ENCODE measurements at regions of chr11 and their contacts with region 1.

Region 1: DNA sequence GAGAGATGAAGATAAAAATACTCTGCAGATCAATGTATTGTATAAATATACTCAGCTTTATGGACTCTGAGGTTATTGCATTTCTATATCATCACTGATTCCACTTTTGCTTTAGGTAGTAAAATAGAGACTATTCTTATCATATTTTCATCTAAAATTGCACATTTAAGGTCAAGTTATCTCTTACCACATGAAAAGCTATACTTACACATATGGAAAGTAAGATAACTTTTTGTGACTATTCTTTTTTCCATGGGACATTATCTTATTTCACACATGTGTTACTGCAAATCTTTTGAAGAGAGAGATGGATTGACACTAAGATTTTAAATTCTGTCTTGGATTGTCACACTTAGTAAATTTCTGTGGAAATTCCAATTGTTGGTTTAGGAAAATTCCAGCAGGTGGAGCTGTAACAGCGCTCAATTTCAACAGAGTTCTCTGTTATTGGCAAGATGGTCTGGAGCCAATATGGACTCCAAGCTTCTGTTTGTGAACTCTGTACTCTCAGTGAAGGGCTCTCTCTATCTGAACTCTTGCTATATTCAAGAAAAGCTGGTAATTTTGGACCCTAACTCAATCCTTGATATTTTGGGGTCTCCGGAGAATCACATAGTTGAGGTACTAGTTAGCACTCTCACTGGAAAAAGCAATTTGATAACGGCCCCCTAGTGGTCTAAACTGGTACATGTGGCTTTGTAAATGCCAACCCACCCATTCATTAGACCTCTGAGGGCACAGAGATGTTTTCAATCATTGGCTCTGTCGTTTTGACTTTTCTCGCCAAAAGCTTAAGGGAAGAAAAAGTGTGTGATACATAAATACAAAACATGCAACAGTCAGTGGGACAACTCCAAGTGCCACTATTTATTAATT is 429.7 kb downstream of the ETS1 start:
- DNase-seq: peak; percentile 74
- H3K4me3 Mint-ChIP-seq: peak overlapping the region; percentile 64
- H3K27ac Mint-ChIP-seq: peak overlapping the region; percentile 82
- H3K4me1 Mint-ChIP-seq: peaks cover 5% of the 10 kb centered on the region
- H3K27me3 Mint-ChIP-seq: no peaks in the 10 kb centered on the region

Region 2: DNA sequence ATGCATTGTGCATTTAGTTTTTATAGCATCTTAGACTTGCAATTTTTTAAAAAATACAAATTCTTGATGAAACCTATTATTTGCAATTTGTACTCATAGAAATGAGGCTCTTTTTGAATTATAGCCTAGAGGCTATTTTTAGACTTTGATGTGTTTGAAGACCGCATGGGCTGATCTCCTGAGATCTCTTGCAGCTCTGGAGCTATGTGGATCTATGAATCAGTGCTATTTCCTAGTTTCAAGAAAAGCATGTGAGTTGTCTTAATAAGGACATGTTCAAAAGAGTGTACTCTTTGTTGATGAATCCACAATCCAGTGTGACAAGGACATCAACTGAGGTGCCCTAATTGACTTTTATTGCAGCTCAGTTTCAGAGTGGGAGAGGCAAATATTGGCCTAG is 190.8 kb before region 1 on chr11:
- CTCF ChIA-PET with region 1: no interaction called
- intact Hi-C with region 1: no loop called
- DNase-seq: no peak
- H3K4me3 Mint-ChIP-seq: no peak overlapping the region
- H3K27ac Mint-ChIP-seq: no peak overlapping the region
- H3K4me1 Mint-ChIP-seq: no peaks in the 10 kb centered on the region
- H3K27me3 Mint-ChIP-seq: peaks cover 19% of the 10 kb centered on the region

Region 3: GRCh38 chr11:128021349-128022006 is 136.2 kb before region 1 on chr11:
- CTCF ChIA-PET with region 1: interaction called, 20 read pairs
- intact Hi-C with region 1: no loop called
- DNase-seq: no peak
- H3K4me3 Mint-ChIP-seq: no peak overlapping the region
- H3K27ac Mint-ChIP-seq: no peak overlapping the region
- H3K4me1 Mint-ChIP-seq: peaks cover 5% of the 10 kb centered on the region
- H3K27me3 Mint-ChIP-seq: no peaks in the 10 kb centered on the region

Region 4: GRCh38 chr11:128047026-128047425 is 110.6 kb before region 1 on chr11:
- CTCF ChIA-PET with region 1: interaction called, 13 read pairs
- intact Hi-C with region 1: no loop called
- DNase-seq: no peak
- H3K4me3 Mint-ChIP-seq: no peak overlapping the region
- H3K27ac Mint-ChIP-seq: no peak overlapping the region
- H3K4me1 Mint-ChIP-seq: peaks cover 59% of the 10 kb centered on the region
- H3K27me3 Mint-ChIP-seq: no peaks in the 10 kb centered on the region

Region 5: GRCh38 chr11:128146926-128147605 is 10.6 kb before region 1 on chr11:
- CTCF ChIA-PET with region 1: interaction called, 15 read pairs
- intact Hi-C with region 1: no loop called
- DNase-seq: no peak
- H3K4me3 Mint-ChIP-seq: no peak overlapping the region
- H3K27ac Mint-ChIP-seq: no peak overlapping the region
- H3K4me1 Mint-ChIP-seq: no peaks in the 10 kb centered on the region
- H3K27me3 Mint-ChIP-seq: no peaks in the 10 kb centered on the region

Region 6: DNA sequence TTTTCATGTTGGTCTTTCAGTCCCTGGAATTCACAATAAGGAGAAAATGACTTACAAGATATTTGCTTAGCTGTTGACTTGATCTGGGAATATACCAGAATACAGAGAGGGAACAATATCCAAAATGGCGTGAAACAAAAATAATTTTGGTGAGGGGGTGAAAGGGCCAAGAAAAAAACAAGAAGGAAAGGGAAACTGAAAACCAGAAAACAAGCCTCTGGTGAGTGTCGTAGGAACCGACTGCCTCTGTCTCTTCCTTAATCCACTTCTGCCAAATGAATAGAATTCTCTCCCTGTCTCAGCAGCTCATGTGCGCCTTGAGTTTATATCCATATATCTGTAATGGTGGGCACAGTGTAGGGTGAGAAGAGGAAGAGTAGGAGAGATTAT is 62.1 kb after region 1 on chr11:
- CTCF ChIA-PET with region 1: no interaction called
- intact Hi-C with region 1: no loop called
- DNase-seq: no peak
- H3K4me3 Mint-ChIP-seq: no peak overlapping the region
- H3K27ac Mint-ChIP-seq: no peak overlapping the region
- H3K4me1 Mint-ChIP-seq: peaks cover 4% of the 10 kb centered on the region
- H3K27me3 Mint-ChIP-seq: no peaks in the 10 kb centered on the region

Region 7: DNA sequence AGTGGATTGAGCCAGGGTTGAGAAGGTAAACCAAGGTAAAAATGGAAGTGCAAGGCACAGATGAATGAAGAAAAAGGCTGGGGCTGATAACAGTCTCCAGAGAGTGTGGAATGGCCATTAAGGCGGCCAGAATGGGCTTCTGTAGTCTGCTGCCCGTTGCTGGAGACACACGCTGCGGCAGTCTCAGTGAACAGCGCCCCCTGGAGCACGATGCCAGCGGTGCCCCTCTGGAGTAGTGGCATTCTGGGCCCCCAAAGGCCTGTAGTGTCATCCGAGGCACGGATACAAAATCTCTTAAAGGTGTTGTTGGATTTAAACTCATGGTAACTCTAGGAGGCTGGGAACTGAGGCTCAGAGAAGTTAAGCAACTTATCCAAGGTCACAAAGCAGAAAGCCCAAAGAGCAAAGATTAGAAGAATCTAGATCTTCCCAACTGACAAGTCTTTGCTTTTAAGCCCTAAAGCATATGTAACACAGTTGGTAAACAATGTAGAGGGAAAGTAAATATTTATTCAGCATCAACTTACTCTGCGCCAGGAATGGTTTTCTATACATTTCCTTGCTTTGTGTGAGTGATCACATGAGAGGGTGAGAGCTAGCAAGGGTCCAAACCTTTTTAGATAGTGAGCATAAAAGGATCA is 691.3 kb after region 1 on chr11:
- CTCF ChIA-PET with region 1: interaction called, 17 read pairs
- intact Hi-C with region 1: no loop called
- DNase-seq: peak; percentile 80
- H3K4me3 Mint-ChIP-seq: no peak overlapping the region
- H3K27ac Mint-ChIP-seq: no peak overlapping the region
- H3K4me1 Mint-ChIP-seq: peaks cover 13% of the 10 kb centered on the region
- H3K27me3 Mint-ChIP-seq: no peaks in the 10 kb centered on the region

Measured in activated naive CD4-positive, alpha-beta T cell treated with anti-CD3 and anti-CD28 coated beads for 36 hours (primary cell).